ENCODE measurements at regions of chr15 and their contacts with region 1.

Region 1: DNA sequence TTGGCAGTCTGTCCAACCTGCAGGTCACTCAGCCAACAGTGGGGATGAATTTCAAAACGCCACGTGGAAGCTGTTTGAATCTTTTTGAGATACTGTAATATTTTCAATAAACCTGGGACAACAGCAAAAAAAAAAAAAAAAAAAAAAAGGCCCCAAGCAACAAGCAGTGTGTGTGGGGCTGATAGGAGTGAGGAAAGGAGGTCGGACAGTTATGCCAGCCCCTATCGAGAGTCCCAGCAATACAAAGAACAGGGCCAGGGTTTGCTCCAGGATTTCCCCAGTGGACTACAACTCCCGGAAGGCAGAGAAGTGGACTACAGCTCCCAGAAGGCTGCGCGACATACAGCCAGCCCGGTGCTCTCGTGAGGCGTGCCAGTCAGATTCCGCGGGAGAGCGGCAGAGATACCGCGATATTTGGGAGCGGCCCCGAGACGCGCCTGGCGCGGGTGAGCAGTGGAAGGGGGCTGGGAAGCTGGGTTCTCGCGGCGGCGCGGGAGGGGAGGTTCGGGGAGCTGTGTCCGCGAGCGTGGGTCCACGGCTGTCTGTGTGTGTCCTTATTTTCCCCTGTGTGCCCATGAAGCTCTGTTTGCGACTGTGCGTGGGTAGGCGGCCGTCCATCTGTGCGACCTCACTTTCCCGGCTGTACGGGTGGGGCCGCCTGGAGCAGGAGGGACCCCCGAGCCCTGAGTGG is at the start of gene PPCDC:
- DNase-seq: peak; percentile 96 to 97 (median 97)
- H3K4me3 ChIP-seq: peak within 1 kb of the TSS; percentile 75
- H3K27ac ChIP-seq: peak within 1 kb of the TSS; percentile 73 to 83
- H3K4me1 ChIP-seq: no peaks in the 10 kb centered on the region
- H3K27me3 ChIP-seq: no peaks in the 10 kb centered on the region
- CTCF ChIP-seq: no peak
- EP300 ChIP-seq: no peak
- POLR2A ChIP-seq: peak; percentile 69
- total RNA-seq, gene PPCDC: 7.9 to 20.6 (median 9.7) TPM

Region 2: GRCh38 chr15:74680456-74680855 is 342.9 kb before region 1 on chr15:
- intact Hi-C with region 1: no loop called
- DNase-seq: no peak
- H3K4me3 ChIP-seq: no peak overlapping the region
- H3K27ac ChIP-seq: no peak overlapping the region
- H3K4me1 ChIP-seq: no peaks in the 10 kb centered on the region
- H3K27me3 ChIP-seq: no peaks in the 10 kb centered on the region
- CTCF ChIP-seq: no peak
- EP300 ChIP-seq: no peak
- POLR2A ChIP-seq: no peak

Region 3: GRCh38 chr15:74956648-74957300 is 66.6 kb before region 1 on chr15 and contains the start of gene RPP25:
- intact Hi-C with region 1: loop called in 1 of 4 experiments (anchors 5 kb)
- DNase-seq: peak; percentile 80 to 88 (median 86)
- H3K4me3 ChIP-seq: peak within 1 kb of the TSS; percentile 56
- H3K27ac ChIP-seq: peak within 1 kb of the TSS; percentile 50 to 89
- H3K4me1 ChIP-seq: peaks cover 3% of the 10 kb centered on the region
- H3K27me3 ChIP-seq: no peaks in the 10 kb centered on the region
- CTCF ChIP-seq: no peak
- EP300 ChIP-seq: no peak
- POLR2A ChIP-seq: peak; percentile 75
- total RNA-seq, gene RPP25: 13.6 to 41.2 (median 28.6) TPM

Region 4: GRCh38 chr15:75207618-75208500 is 184.5 kb after region 1 on chr15:
- intact Hi-C with region 1: loop called in 1 of 4 experiments (anchors 2 kb)
- DNase-seq: no peak
- H3K4me3 ChIP-seq: no peak overlapping the region
- H3K27ac ChIP-seq: no peak overlapping the region
- H3K4me1 ChIP-seq: peaks cover 10% of the 10 kb centered on the region
- H3K27me3 ChIP-seq: no peaks in the 10 kb centered on the region
- CTCF ChIP-seq: no peak
- EP300 ChIP-seq: no peak
- POLR2A ChIP-seq: no peak

Region 5: GRCh38 chr15:75307778-75308391 is 284.6 kb after region 1 on chr15:
- intact Hi-C with region 1: loop called in 1 of 4 experiments (anchors 10 kb)
- DNase-seq: peak in 3 of 5 donors; percentile 26 to 64 (median 37)
- H3K4me3 ChIP-seq: no peak overlapping the region
- H3K27ac ChIP-seq: no peak overlapping the region
- H3K4me1 ChIP-seq: no peaks in the 10 kb centered on the region
- H3K27me3 ChIP-seq: no peaks in the 10 kb centered on the region
- CTCF ChIP-seq: no peak
- EP300 ChIP-seq: no peak
- POLR2A ChIP-seq: no peak

Measured in ovary (tissue), 10 donors.